Right ventricle myocardium inferior (tissue), 1 donor: ENCODE measurements at regions of chr3 and their contacts with region 1.

Region 1: GRCh38 chr3:104458657-104459056 is 908.1 kb upstream of the ALCAM start:
- DNase-seq: no peak
- ATAC-seq: no peak

Region 2: DNA sequence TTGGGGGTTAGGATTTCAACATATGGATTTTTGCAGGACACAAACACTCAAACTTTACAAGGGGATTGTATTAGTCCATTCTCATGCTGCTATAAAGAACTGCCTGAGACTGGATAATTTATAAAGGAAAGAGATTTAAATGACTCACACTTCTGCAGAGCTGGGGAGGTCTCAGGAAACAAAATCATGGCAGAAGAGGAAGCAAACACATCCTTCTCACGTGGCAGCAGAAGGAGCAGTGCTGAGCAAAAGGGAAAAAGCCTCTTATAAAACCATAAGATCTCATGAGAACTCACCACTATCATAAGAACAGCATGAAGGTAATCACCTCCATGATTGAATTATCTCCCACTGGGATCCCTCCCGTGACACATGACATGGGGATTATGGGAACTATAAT is 840.7 kb before region 1 on chr3:
- intact Hi-C with region 1: no loop called
- DNase-seq: no peak
- ATAC-seq: no peak

Region 3: DNA sequence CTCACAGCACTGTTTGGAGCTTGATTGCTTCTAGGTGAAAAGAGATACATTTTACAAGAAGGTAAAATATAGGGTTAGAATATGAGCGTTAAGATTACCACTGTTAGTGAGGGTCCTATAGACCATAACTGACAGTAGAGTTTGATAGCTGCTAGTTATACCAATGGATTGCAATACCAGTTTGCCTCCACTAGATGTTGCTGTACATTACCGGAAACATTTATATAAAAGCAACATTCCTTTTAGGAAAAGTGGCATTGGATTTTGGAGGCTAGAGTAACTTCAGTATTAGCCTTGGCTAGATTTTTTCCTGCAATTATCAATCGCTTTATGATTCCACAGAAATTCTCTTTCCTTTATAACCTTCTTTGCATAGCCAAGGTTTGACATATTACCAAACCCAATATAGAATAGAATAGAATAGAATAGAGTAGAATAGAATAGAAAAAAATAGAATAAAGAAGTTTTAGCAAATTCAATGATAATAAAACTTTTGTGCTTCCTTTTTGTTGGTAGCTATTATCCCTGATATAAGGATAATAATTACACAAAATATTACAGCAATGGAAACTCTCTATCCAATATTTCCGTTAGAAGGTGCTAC is 185.5 kb before region 1 on chr3:
- intact Hi-C with region 1: loop called (anchors 10 kb)
- DNase-seq: no peak
- ATAC-seq: no peak